Lower leg skin (tissue), 4 donors: ENCODE measurements at regions of chr15 and their contacts with region 1.

Region 1: DNA sequence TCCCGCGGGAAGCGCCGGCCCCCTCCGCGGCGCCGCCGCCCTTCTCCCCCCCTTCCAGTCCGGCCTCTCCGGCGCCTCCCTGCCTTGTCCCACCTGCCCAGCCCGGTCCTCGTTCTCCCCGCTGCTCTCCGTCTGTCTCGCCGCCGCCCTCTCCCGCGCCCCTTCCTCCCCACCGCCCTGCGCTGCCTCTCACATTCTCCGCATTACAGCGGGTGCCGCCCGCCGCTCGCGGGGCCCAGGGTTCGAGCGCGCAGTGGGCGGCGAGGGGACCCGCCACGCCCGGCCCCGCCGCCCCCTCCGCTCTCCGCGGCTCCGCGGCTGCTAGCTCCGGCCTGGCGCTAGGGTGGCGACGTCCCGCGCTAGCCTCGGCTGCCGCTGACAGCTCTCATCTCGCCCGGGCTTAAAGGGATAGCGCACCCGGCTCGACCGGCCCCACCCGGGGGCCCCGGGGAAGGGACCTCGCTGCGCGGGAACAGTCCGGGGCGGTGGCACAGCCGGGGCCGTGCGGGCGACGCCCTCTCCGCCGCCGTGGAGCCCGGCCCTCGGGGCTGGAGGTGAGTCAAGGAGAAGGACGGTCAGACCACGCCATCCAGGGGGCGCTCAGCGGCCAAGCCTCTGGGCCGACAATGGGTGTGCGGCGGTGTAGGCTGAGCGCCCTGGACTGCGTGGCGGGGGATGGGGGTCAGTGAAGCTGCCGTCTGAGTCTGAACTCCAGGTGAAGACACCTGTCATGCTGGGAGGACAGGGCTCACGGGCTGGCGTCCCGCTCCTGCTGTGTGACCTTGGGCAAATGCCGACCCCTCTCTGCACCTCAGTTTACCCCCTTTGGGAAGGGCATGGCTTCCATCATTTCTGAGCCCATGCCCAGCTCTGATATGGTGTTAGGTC is 187.4 kb upstream of the LINGO1 start:
- DNase-seq: no peak
- H3K4me3 ChIP-seq: no peak overlapping the region
- CTCF ChIP-seq: no peak
- POLR2A ChIP-seq: no peak

Region 2: GRCh38 chr15:75867449-75867848 is 1952.6 kb before region 1 on chr15:
- intact Hi-C with region 1: no loop called
- DNase-seq: no peak
- H3K4me3 ChIP-seq: no peak overlapping the region
- CTCF ChIP-seq: no peak
- POLR2A ChIP-seq: no peak

Region 3: DNA sequence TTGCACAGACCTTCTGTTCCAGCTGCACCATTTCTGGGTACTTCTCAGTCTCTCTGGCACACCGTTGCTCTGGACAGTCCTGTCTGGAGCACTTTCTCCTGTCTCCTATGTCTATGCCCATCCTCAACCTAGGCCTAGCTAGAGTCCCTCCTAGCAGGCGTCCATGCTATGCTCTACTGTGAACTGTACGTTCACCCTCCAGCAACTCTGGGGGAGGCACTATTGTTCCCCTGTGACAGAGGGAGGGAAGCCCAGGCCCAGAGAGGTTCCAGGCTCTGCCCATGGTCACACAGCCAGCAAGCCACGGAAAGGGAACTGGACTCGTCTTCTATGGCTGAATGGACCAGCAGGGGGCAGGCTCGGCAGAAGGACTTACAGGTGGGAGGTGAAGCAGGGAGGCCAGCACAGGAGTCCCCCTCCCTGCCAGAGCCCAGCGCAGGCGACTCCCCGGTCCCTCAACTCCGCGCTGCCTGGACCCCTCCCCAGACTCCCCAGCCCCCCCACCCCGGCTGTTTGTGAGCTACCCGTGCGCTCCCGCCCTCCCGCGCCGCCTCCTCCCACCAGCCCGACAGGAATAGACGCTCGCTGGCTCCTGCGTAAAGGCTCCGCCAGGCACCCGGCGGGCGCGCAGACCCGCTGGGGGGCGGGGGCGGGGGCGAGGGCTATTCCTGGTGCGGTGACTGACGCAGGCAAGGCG is 185.7 kb before region 1 on chr15:
- intact Hi-C with region 1: loop called (anchors 2 kb)
- DNase-seq: peak in 1 of 2 donors; percentile 90
- H3K4me3 ChIP-seq: no peak overlapping the region
- CTCF ChIP-seq: no peak
- POLR2A ChIP-seq: no peak